ENCODE measurements at regions of chr6 and their contacts with region 1.

Region 1: GRCh38 chr6:52233975-52234823 is 10.1 kb downstream of the IL17F start:
- DNase-seq: peak in 1 of 2 donors; percentile 50
- ATAC-seq: peak; percentile 81 to 93 (median 85)
- H3K4me3 ChIP-seq: no peak overlapping the region
- H3K27ac ChIP-seq: no peak overlapping the region
- H3K4me1 ChIP-seq: no peaks in the 10 kb centered on the region
- H3K27me3 ChIP-seq: no peaks in the 10 kb centered on the region
- CTCF ChIP-seq: peak; percentile 70

Region 2: GRCh38 chr6:51893356-51893755 is 340.8 kb before region 1 on chr6:
- intact Hi-C with region 1: no loop called
- DNase-seq: no peak
- ATAC-seq: no peak
- H3K4me3 ChIP-seq: no peak overlapping the region
- H3K27ac ChIP-seq: no peak overlapping the region
- H3K4me1 ChIP-seq: no peaks in the 10 kb centered on the region
- H3K27me3 ChIP-seq: no peaks in the 10 kb centered on the region
- CTCF ChIP-seq: no peak

Region 3: GRCh38 chr6:52087498-52087999 is 146.7 kb before region 1 on chr6 and contains the start of gene PKHD1:
- intact Hi-C with region 1: loop called in 1 of 2 experiments (anchors 5 kb)
- DNase-seq: no peak
- ATAC-seq: peak in 3 of 4 donors; percentile 43 to 93 (median 72)
- H3K4me3 ChIP-seq: no peak within 1 kb of the TSS
- H3K27ac ChIP-seq: no peak within 1 kb of the TSS
- H3K4me1 ChIP-seq: no peaks in the 10 kb centered on the region
- H3K27me3 ChIP-seq: no peaks in the 10 kb centered on the region
- CTCF ChIP-seq: peak; percentile 50
- total RNA-seq, gene PKHD1: 0.02 to 0.11 (median 0.04) TPM in 3 of 4 donors, not detected in the other

Region 4: GRCh38 chr6:52098634-52099185 is 135.5 kb before region 1 on chr6:
- intact Hi-C with region 1: loop called in 1 of 2 experiments (anchors 2 kb)
- DNase-seq: no peak
- ATAC-seq: peak in 1 of 4 donors; percentile 49
- H3K4me3 ChIP-seq: no peak overlapping the region
- H3K27ac ChIP-seq: no peak overlapping the region
- H3K4me1 ChIP-seq: peaks cover 28% of the 10 kb centered on the region
- H3K27me3 ChIP-seq: no peaks in the 10 kb centered on the region
- CTCF ChIP-seq: peak; percentile 30

Region 5: DNA sequence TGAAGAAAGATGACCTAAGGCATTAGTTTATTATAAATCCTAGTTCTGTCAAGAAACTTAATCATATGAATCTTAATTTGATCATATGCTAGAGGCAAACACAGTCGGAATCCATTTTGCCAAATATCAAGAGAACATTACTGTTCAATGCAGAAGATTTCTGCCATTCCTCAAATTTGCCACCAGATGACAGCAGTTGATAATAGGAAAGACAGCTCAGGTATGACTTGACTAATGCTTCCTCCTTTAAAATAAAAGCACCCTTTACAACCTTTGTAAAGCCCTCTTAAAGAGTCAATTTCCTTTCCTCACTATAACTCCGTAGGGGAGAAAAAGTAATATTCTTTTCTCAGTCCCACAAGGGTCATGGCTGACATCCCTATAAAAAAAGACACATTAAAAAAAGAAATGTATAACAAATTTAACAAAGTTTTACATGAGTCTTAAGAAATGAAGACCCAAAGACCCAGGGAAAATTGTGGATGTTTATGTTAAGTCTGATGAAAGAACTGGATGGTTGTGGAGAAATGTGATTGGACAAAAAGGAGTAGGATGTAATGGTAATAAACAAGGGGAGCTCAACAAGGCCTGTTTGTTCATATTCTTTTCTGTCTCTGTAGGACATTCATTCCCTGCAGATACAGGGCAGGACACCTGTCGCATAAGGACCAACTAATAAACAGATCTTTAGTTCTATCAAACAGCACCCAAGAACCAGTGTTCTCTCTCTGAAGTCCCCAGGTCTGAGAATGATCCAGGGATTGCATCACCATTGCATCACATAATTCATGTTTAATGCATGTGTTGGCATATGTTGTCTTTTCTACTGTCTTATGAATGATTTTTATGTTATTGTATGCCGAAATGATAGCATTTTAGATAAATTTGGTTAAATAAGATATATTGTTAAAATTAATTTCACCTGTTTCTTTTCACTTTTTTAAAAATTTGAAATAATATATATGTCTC is 71.0 kb before region 1 on chr6:
- intact Hi-C with region 1: loop called in 1 of 2 experiments (anchors 1 kb)
- DNase-seq: no peak
- ATAC-seq: peak in 2 of 4 donors; percentile 54 to 56
- H3K4me3 ChIP-seq: no peak overlapping the region
- H3K27ac ChIP-seq: no peak overlapping the region
- H3K4me1 ChIP-seq: no peaks in the 10 kb centered on the region
- H3K27me3 ChIP-seq: no peaks in the 10 kb centered on the region
- CTCF ChIP-seq: peak; percentile 68

Region 6: DNA sequence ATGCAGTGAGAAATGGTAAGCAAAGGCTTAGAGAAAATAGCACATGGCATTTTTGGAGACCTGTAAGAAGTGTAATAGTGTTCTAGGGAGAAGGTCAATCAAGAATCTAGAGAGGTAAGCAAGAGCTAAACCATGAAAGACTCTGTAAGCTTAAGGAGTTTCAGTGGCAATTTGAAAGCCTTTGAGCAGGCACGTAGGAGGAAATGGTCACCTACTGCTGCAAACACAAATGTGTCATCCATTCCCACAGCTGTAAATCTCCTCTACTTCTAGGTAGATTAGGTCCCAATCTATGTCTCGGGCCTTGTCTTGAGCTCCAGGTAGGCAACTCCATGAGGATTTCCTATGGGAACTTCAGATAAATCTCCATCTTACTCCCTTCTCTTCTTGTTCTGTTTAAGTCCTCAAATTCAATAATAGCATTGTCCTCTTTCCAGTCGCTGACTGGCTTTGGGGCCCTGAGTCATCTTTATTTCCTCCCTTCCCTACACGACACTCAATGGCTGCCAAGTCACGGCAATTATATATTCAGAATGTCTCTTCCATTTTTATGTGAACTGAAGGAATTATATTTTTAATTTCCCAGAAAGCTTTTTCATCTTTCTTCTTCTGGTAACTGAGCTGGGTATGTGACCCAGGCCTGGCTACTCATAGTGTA is 103.6 kb after region 1 on chr6:
- intact Hi-C with region 1: no loop called
- DNase-seq: no peak
- ATAC-seq: no peak
- H3K4me3 ChIP-seq: no peak overlapping the region
- H3K27ac ChIP-seq: no peak overlapping the region
- H3K4me1 ChIP-seq: no peaks in the 10 kb centered on the region
- H3K27me3 ChIP-seq: peaks cover 0 to 2% (median 0%) of the 10 kb centered on the region in 3 donors
- CTCF ChIP-seq: no peak